Mammary epithelial cell (primary cell): ENCODE measurements at regions of chr16 and their contacts with region 1.

Region 1: GRCh38 chr16:67961551-67962534 is 6.6 kb downstream of the SLC12A4 start:
- DNase-seq: peak; percentile 99
- H3K4me3 ChIP-seq: no peak overlapping the region
- H3K27ac ChIP-seq: peak overlapping the region; percentile 8
- H3K4me1 ChIP-seq: peaks cover 55% of the 10 kb centered on the region
- H3K27me3 ChIP-seq: no peaks in the 10 kb centered on the region
- CTCF ChIP-seq: no peak

Region 2: GRCh38 chr16:67703626-67704025 is 258.2 kb before region 1 on chr16:
- CTCF ChIA-PET with region 1: no interaction called
- dilution Hi-C with region 1: no loop called
- in situ Hi-C with region 1: no loop called
- intact Hi-C with region 1: no loop called
- DNase-seq: no peak
- H3K4me3 ChIP-seq: no peak overlapping the region
- H3K27ac ChIP-seq: no peak overlapping the region
- H3K4me1 ChIP-seq: peaks cover 2% of the 10 kb centered on the region
- H3K27me3 ChIP-seq: no peaks in the 10 kb centered on the region
- CTCF ChIP-seq: no peak

Region 3: DNA sequence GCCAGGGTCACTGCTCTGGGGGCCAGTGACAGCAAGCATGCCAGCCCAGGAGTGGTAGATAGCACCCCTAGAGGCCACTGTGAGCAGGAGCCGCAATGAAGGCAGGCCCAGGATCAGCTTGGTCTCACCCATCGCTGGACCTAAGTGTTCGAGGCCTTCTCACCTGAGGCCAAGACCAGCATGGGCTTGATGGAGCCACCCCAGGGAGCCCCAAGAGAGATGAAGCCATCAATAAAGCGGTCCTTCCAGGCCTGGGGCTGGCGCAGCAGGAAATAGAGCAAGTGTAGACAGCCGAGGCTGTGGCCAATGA is 19.7 kb before region 1 on chr16:
- CTCF ChIA-PET with region 1: interaction called, 3 read pairs
- dilution Hi-C with region 1: no loop called
- in situ Hi-C with region 1: no loop called
- intact Hi-C with region 1: loop called (anchors 2 kb)
- DNase-seq: no peak
- H3K4me3 ChIP-seq: no peak overlapping the region
- H3K27ac ChIP-seq: no peak overlapping the region
- H3K4me1 ChIP-seq: peaks cover 2% of the 10 kb centered on the region
- H3K27me3 ChIP-seq: no peaks in the 10 kb centered on the region
- CTCF ChIP-seq: peak; percentile 78 to 84

Region 4: GRCh38 chr16:68244903-68245853 is 283.3 kb after region 1 on chr16 and contains the start of gene PLA2G15:
- CTCF ChIA-PET with region 1: no interaction called
- dilution Hi-C with region 1: no loop called
- in situ Hi-C with region 1: no loop called
- intact Hi-C with region 1: no loop called
- DNase-seq: peak; percentile 93
- H3K4me3 ChIP-seq: peak within 1 kb of the TSS; percentile 53 to 98 (median 95)
- H3K27ac ChIP-seq: no peak within 1 kb of the TSS
- H3K4me1 ChIP-seq: peaks cover 20% of the 10 kb centered on the region
- H3K27me3 ChIP-seq: no peaks in the 10 kb centered on the region
- CTCF ChIP-seq: peak in 1 of 2 donors; percentile 7
- total RNA-seq, gene PLA2G15: 12.4 to 19.8 TPM